Gastrocnemius medialis (tissue), 4 donors: ENCODE measurements at regions of chr22 and their contacts with region 1.

Region 1: DNA sequence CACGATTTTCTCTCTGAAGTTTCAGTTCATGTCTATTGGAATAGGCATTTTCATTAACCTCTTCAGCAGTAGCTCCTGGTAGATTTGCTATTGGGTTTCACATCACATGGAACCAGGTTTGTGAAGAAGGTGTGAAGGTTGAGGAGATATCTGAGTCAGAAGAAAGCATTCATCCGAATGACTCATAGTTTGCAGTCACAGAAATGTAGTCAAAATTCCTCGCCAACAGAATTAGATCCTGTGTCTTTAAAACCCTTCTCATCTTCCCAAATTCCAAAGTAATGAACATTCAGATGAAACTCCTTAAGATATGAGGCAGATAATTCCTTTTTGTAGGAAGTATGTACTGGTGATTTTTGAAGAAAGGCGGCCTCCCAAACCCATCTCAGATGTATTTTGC is 125.0 kb upstream of the LARGE1 start:
- DNase-seq: no peak
- ATAC-seq: no peak
- H3K4me3 ChIP-seq: no peak overlapping the region
- H3K27ac ChIP-seq: no peak overlapping the region
- H3K4me1 ChIP-seq: no peaks in the 10 kb centered on the region
- H3K27me3 ChIP-seq: no peaks in the 10 kb centered on the region
- CTCF ChIP-seq: no peak
- POLR2A ChIP-seq: no peak

Region 2: GRCh38 chr22:33303099-33303498 is 742.2 kb before region 1 on chr22:
- in situ Hi-C with region 1: no loop called
- intact Hi-C with region 1: no loop called
- DNase-seq: no peak
- ATAC-seq: peak in 1 of 2 donors; percentile 31
- H3K4me3 ChIP-seq: no peak overlapping the region
- H3K27ac ChIP-seq: no peak overlapping the region
- H3K4me1 ChIP-seq: peaks cover 5 to 6% of the 10 kb centered on the region in 2 donors
- H3K27me3 ChIP-seq: no peaks in the 10 kb centered on the region
- CTCF ChIP-seq: no peak
- POLR2A ChIP-seq: no peak

Region 3: GRCh38 chr22:33984656-33985285 is 60.5 kb before region 1 on chr22:
- in situ Hi-C with region 1: loop called in 1 of 4 experiments (anchors 10 kb)
- intact Hi-C with region 1: no loop called
- DNase-seq: no peak
- ATAC-seq: no peak
- H3K4me3 ChIP-seq: no peak overlapping the region
- H3K27ac ChIP-seq: no peak overlapping the region
- H3K4me1 ChIP-seq: no peaks in the 10 kb centered on the region
- H3K27me3 ChIP-seq: no peaks in the 10 kb centered on the region
- CTCF ChIP-seq: no peak
- POLR2A ChIP-seq: no peak

Region 4: GRCh38 chr22:34225278-34225677 is 180.0 kb after region 1 on chr22:
- in situ Hi-C with region 1: no loop called
- intact Hi-C with region 1: no loop called
- DNase-seq: no peak
- ATAC-seq: peak; percentile 42 to 68
- H3K4me3 ChIP-seq: no peak overlapping the region
- H3K27ac ChIP-seq: peak overlapping the region in 3 of 4 donors; percentile 50 to 63 (median 59)
- H3K4me1 ChIP-seq: no peaks in the 10 kb centered on the region
- H3K27me3 ChIP-seq: no peaks in the 10 kb centered on the region
- CTCF ChIP-seq: no peak
- POLR2A ChIP-seq: no peak